Activated CD8-positive, alpha-beta T cell treated with anti-CD3 and anti-CD28 coated beads, Interleukin-2, amount 10 ng/mL, durations not matched to agents 7 days and 5 days (primary cell): ENCODE measurements at regions of chr1 and their contacts with region 1.

Region 1: DNA sequence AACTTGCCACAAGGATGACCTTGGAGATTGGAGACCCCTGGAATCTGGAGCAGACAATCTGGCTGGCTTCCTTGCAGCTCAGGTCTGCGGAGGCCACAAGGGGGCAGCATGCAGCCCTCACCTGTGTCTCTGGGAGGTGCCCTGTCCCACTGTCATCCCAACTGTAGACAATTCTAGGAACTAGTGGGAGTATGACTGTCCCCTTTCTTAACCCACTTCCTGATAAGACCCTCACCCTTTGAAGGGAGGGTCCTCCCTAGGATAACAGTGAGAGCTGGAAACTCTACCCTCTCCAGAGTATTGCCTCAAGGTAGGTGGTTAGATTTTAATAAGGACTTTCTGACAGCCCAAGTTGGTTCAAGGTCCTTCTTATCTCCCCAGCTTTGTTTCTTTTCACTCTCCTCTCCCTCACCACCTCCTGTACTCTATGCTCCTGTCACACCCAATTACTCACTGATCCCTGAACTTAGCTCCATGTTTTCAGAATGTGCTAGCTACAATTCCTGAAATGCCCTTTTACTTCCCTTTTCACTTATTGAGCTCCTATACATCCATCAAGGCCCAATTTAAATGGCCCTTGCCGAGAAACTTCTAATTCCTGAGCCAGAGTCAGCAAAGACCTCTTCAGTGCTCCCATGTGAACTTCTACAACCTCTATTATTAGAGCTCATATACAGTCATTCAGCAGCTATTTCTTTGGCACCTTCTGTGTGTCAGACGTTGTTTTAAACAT is 9.2 kb upstream of the KCNQ4 start:
- DNase-seq: peak; percentile 76
- ATAC-seq: peak; percentile 72
- H3K4me3 Mint-ChIP-seq: no peak overlapping the region
- H3K27ac Mint-ChIP-seq: peak overlapping the region; percentile 11
- H3K4me1 Mint-ChIP-seq: peaks cover 26% of the 10 kb centered on the region
- H3K27me3 Mint-ChIP-seq: no peaks in the 10 kb centered on the region

Region 2: GRCh38 chr1:40709100-40709801 is 65.2 kb before region 1 on chr1:
- CTCF ChIA-PET with region 1: interaction called, 21 read pairs
- POLR2A ChIA-PET with region 1: no interaction called
- DNase-seq: peak; percentile 91
- ATAC-seq: peak; percentile 98
- H3K4me3 Mint-ChIP-seq: peak overlapping the region; percentile 98
- H3K27ac Mint-ChIP-seq: peak overlapping the region; percentile 98
- H3K4me1 Mint-ChIP-seq: peaks cover 61% of the 10 kb centered on the region
- H3K27me3 Mint-ChIP-seq: no peaks in the 10 kb centered on the region

Region 3: GRCh38 chr1:40755067-40755466 is 19.4 kb before region 1 on chr1:
- CTCF ChIA-PET with region 1: interaction called, 16 read pairs
- POLR2A ChIA-PET with region 1: no interaction called
- DNase-seq: no peak
- ATAC-seq: no peak
- H3K4me3 Mint-ChIP-seq: no peak overlapping the region
- H3K27ac Mint-ChIP-seq: no peak overlapping the region
- H3K4me1 Mint-ChIP-seq: peaks cover 20% of the 10 kb centered on the region
- H3K27me3 Mint-ChIP-seq: no peaks in the 10 kb centered on the region

Region 4: DNA sequence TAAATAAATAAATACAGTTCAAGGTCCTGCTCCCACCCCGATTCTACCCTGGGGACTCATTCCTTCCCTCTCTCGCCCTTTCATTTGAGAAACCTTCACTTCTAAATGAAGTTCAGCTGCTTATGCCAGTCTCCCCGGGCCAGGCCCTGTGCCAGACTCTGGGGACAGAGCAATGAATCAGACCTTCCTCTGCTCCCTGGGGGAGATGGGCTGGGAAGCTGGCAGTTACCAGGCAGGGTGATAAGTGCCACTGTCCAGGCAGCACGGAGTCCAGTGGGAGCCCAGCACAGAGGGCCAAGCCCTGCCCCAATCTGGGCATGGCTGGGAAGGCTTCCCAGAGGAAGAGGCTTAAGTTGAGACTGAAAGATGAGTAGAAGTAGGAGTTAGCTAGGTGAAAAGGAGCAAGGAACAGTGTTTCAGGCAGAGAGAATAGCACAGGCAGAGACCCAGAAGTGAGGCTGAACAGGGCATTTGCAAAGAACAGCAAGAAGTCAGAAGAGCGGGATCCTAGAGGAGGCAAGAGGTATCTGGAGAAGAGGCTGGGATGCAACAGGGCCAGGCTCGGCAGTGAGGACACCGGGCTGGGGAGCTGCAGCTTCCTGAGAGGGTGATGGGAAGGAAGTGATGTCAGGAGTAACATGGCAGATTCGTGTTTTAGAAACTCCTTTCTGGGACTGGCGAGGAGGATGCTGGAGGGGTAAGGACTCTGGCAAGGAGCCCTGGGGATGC is 22.7 kb after region 1 on chr1:
- CTCF ChIA-PET with region 1: interaction called, 69 read pairs
- POLR2A ChIA-PET with region 1: no interaction called
- DNase-seq: no peak
- ATAC-seq: no peak
- H3K4me3 Mint-ChIP-seq: peak overlapping the region; percentile 3
- H3K27ac Mint-ChIP-seq: peak overlapping the region; percentile 74
- H3K4me1 Mint-ChIP-seq: peaks cover 62% of the 10 kb centered on the region
- H3K27me3 Mint-ChIP-seq: peaks cover 2% of the 10 kb centered on the region

Region 5: GRCh38 chr1:40840526-40841323 is 66.3 kb after region 1 on chr1:
- CTCF ChIA-PET with region 1: interaction called, 25 read pairs
- POLR2A ChIA-PET with region 1: no interaction called
- DNase-seq: peak; percentile 83
- ATAC-seq: peak; percentile 90
- H3K4me3 Mint-ChIP-seq: peak overlapping the region; percentile 50
- H3K27ac Mint-ChIP-seq: peak overlapping the region; percentile 91
- H3K4me1 Mint-ChIP-seq: peaks cover 39% of the 10 kb centered on the region
- H3K27me3 Mint-ChIP-seq: peaks cover 2% of the 10 kb centered on the region

Region 6: GRCh38 chr1:40951943-40952743 is 177.7 kb after region 1 on chr1:
- CTCF ChIA-PET with region 1: interaction called, 80 read pairs
- POLR2A ChIA-PET with region 1: no interaction called
- DNase-seq: peak; percentile 68
- ATAC-seq: peak; percentile 85
- H3K4me3 Mint-ChIP-seq: no peak overlapping the region
- H3K27ac Mint-ChIP-seq: peak overlapping the region; percentile 55
- H3K4me1 Mint-ChIP-seq: peaks cover 27% of the 10 kb centered on the region
- H3K27me3 Mint-ChIP-seq: peaks cover 31% of the 10 kb centered on the region